Posterior vena cava (tissue), 2 donors: ENCODE measurements at regions of chr11 and their contacts with region 1.

Region 1: DNA sequence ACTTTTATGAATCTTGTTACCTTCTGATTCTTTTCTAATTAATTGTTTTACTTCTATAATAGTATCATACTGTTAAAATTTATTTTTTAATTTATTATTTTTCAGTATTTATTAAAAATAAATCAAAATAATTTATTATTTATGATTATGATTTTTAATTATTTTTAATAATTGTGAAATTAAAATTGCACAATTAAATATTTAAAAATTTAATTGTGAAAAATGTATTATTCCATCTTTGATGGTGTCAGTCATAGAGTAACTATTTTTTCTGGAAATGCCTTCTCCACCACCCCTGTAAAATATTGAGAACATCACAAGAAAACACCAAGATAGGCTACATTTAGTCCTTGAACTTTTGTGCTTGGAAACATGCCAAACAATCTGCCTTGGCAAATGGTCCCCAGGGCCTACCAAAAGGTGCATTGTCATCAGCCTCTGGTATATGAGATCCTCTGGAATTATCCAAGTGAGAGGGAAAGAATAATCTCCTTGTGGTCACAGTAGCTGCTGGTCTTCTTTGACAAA is at the start of gene OR8H2:
- DNase-seq: no peak
- total RNA-seq, gene OR8H2: not detected

Region 2: GRCh38 chr11:55920537-55920936 is 182.7 kb before region 1 on chr11:
- intact Hi-C with region 1: loop called in 1 of 2 experiments (anchors 5 kb)
- DNase-seq: no peak